ENCODE measurements at regions of chr1 and their contacts with region 1.

Region 1: GRCh38 chr1:179954493-179955297 is at the start of gene CEP350:
- DNase-seq: peak; percentile 99
- ATAC-seq: peak; percentile 93
- H3K4me3 ChIP-seq: peak within 1 kb of the TSS; percentile 85
- H3K27ac ChIP-seq: peak within 1 kb of the TSS; percentile 76
- H3K4me1 ChIP-seq: peaks cover 21% of the 10 kb centered on the region
- H3K27me3 ChIP-seq: no peaks in the 10 kb centered on the region
- CTCF ChIP-seq: no peak
- EP300 ChIP-seq: no peak
- POLR2A ChIP-seq: peak; percentile 98
- RAD21 ChIP-seq: no peak
- polyA plus RNA-seq, gene CEP350: 5.2 to 6.7 TPM

Region 2: GRCh38 chr1:179322557-179322956 is 632.1 kb before region 1 on chr1:
- CTCF ChIA-PET with region 1: no interaction called
- POLR2A ChIA-PET with region 1: no interaction called
- RAD21 ChIA-PET with region 1: no interaction called
- SMC1A ChIA-PET with region 1: no interaction called
- in situ Hi-C with region 1: no loop called
- intact Hi-C with region 1: no loop called
- DNase-seq: no peak
- ATAC-seq: no peak
- H3K4me3 ChIP-seq: no peak overlapping the region
- H3K27ac ChIP-seq: no peak overlapping the region
- H3K4me1 ChIP-seq: no peaks in the 10 kb centered on the region; the same call in 1 of the 2 replicates
- H3K27me3 ChIP-seq: no peaks in the 10 kb centered on the region
- CTCF ChIP-seq: no peak
- EP300 ChIP-seq: no peak
- POLR2A ChIP-seq: no peak
- RAD21 ChIP-seq: no peak

Region 3: GRCh38 chr1:179996099-179996498 is 41.4 kb after region 1 on chr1:
- CTCF ChIA-PET with region 1: no interaction called
- POLR2A ChIA-PET with region 1: interaction called, 3 read pairs
- RAD21 ChIA-PET with region 1: interaction called, 3 read pairs
- SMC1A ChIA-PET with region 1: no interaction called
- in situ Hi-C with region 1: no loop called
- intact Hi-C with region 1: loop called (anchors 2 kb)
- DNase-seq: no peak
- ATAC-seq: peak; percentile 86
- H3K4me3 ChIP-seq: no peak overlapping the region
- H3K27ac ChIP-seq: no peak overlapping the region
- H3K4me1 ChIP-seq: peaks cover 17% of the 10 kb centered on the region
- H3K27me3 ChIP-seq: no peaks in the 10 kb centered on the region
- CTCF ChIP-seq: no peak
- EP300 ChIP-seq: no peak
- POLR2A ChIP-seq: no peak
- RAD21 ChIP-seq: no peak

Region 4: DNA sequence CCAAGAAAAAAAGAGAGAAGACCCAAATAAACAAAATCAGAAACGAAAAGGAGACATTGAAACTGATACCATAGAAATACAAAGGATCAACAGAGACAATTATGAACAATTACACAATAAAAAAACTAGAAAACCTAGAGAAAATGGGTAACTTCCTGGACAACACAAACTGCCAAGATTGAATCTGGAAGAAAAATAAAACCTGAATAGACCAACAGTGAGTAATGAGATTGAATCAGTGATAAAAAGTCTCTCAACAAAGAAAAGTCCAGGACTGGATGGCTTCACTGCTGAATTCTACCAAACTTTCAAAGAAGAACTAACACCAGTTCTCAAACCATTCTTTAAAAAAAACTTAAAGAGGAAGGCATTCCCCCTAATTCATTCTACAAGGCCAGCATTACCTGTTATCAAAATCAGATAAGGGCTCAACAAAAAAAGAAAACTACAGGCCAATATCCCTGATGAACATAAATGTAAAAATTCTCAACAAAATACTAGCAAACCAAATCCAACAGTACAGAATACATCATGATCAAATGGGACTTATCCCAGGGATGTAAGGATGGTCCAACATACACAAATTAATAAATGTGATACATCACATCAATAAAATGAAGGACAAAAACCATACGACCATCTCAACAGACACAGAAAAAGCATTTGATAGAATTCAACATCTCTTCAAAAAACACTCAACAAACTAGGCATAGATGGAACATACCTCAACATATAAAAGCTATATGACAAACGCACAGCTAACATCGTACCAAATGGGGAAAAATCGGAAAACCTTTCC is 427.8 kb after region 1 on chr1:
- CTCF ChIA-PET with region 1: no interaction called
- POLR2A ChIA-PET with region 1: no interaction called
- RAD21 ChIA-PET with region 1: no interaction called
- SMC1A ChIA-PET with region 1: no interaction called
- in situ Hi-C with region 1: no loop called
- intact Hi-C with region 1: no loop called
- DNase-seq: no peak
- ATAC-seq: no peak
- H3K4me3 ChIP-seq: no peak overlapping the region
- H3K27ac ChIP-seq: no peak overlapping the region
- H3K4me1 ChIP-seq: peaks cover 3% of the 10 kb centered on the region; the same call in 1 of the 2 replicates
- H3K27me3 ChIP-seq: no peaks in the 10 kb centered on the region
- CTCF ChIP-seq: no peak
- EP300 ChIP-seq: no peak
- POLR2A ChIP-seq: no peak
- RAD21 ChIP-seq: no peak